ENCODE measurements at regions of chr11 and their contacts with region 1.

Region 1: GRCh38 chr11:107928046-107928766 is at the start of gene RAB39A:
- DNase-seq: peak; percentile 93
- H3K4me3 ChIP-seq: peak within 1 kb of the TSS; percentile 17 to 48 (median 28)
- H3K27ac ChIP-seq: no peak within 1 kb of the TSS
- H3K4me1 ChIP-seq: peaks cover 2% of the 10 kb centered on the region
- H3K27me3 ChIP-seq: peaks cover 9 to 14% of the 10 kb centered on the region in 2 experiments
- CTCF ChIP-seq: no peak
- POLR2A ChIP-seq: no peak
- total RNA-seq, gene RAB39A: not detected in 2 replicates

Region 2: GRCh38 chr11:107696140-107696539 is 232.1 kb before region 1 on chr11:
- CTCF ChIA-PET with region 1: no interaction called
- POLR2A ChIA-PET with region 1: no interaction called
- dilution Hi-C with region 1: no loop called
- intact Hi-C with region 1: loop called (anchors 1 kb)
- DNase-seq: peak; percentile 90
- H3K4me3 ChIP-seq: no peak overlapping the region
- H3K27ac ChIP-seq: peak overlapping the region; percentile 15
- H3K4me1 ChIP-seq: peaks cover 16% of the 10 kb centered on the region
- H3K27me3 ChIP-seq: no peaks in the 10 kb centered on the region
- CTCF ChIP-seq: no peak
- POLR2A ChIP-seq: no peak

Region 3: GRCh38 chr11:107770551-107770951 is 157.7 kb before region 1 on chr11:
- CTCF ChIA-PET with region 1: no interaction called
- POLR2A ChIA-PET with region 1: no interaction called
- dilution Hi-C with region 1: no loop called
- intact Hi-C with region 1: no loop called
- DNase-seq: no peak
- H3K4me3 ChIP-seq: no peak overlapping the region
- H3K27ac ChIP-seq: no peak overlapping the region
- H3K4me1 ChIP-seq: no peaks in the 10 kb centered on the region
- H3K27me3 ChIP-seq: peaks cover 2 to 4% of the 10 kb centered on the region in 2 experiments
- CTCF ChIP-seq: no peak
- POLR2A ChIP-seq: no peak

Region 4: GRCh38 chr11:107916671-107917241 is 11.4 kb before region 1 on chr11:
- CTCF ChIA-PET with region 1: interaction called, 18 read pairs
- POLR2A ChIA-PET with region 1: interaction called, 6 read pairs
- dilution Hi-C with region 1: no loop called
- intact Hi-C with region 1: no loop called
- DNase-seq: no peak
- H3K4me3 ChIP-seq: no peak overlapping the region
- H3K27ac ChIP-seq: no peak overlapping the region
- H3K4me1 ChIP-seq: no peaks in the 10 kb centered on the region
- H3K27me3 ChIP-seq: no peaks in the 10 kb centered on the region
- CTCF ChIP-seq: peak in 1 of 2 donors; percentile 65
- POLR2A ChIP-seq: no peak

Region 5: DNA sequence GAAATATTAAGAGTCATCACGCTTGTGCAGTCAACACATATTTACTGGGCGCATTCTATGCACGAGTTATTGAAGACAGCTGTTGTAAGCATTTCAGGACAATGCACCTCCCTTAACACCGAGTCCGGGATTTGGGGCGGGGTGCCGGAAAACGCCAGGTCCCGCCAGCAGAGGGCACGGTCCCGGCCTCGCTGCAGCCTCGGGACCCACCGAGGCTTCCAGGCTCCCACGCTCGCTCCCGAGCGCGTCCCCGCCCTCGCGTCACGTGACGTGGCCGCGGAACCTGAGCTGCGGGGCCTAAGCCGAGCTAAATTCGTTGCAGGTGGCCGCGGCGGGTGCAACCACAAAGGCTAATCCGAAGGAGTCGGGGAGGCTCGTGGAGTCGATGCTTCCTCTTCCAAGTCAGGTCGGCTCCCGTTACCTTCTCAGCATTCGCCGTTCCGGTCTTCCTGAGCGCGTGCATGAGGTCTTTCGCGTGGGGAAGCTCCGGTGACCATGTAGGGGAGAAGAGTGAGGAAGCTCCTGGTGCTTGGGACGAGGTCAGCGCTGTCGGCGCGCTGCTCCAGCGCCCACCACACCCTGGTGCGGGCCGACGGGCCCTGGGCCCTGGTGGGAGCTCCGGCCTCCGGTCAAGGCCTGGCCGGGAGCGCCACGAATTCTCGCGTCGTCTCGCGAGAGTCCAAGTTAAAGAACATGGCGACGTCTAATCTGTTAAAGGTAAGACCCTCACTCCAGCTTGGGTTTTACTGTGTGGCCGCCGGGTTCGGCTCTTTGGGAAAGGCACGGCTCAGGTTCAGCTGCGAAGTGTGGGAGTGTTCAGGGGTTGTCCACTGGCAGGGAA is 80.7 kb after region 1 on chr11 and contains the start of gene CUL5:
- CTCF ChIA-PET with region 1: interaction called, 4 read pairs
- POLR2A ChIA-PET with region 1: no interaction called
- dilution Hi-C with region 1: no loop called
- intact Hi-C with region 1: loop called (anchors 2 kb)
- DNase-seq: peak; percentile 90
- H3K4me3 ChIP-seq: peak within 1 kb of the TSS; percentile 44 to 88 (median 60)
- H3K27ac ChIP-seq: peak within 1 kb of the TSS; percentile 75
- H3K4me1 ChIP-seq: peaks cover 12% of the 10 kb centered on the region
- H3K27me3 ChIP-seq: no peaks in the 10 kb centered on the region
- CTCF ChIP-seq: peak; percentile 91 to 96
- POLR2A ChIP-seq: peak; percentile 91
- total RNA-seq, gene CUL5: 36.6 and 37.6 TPM in 2 replicates